Vagina (tissue), 2 donors: ENCODE measurements at regions of chr14 and their contacts with region 1.

Region 1: DNA sequence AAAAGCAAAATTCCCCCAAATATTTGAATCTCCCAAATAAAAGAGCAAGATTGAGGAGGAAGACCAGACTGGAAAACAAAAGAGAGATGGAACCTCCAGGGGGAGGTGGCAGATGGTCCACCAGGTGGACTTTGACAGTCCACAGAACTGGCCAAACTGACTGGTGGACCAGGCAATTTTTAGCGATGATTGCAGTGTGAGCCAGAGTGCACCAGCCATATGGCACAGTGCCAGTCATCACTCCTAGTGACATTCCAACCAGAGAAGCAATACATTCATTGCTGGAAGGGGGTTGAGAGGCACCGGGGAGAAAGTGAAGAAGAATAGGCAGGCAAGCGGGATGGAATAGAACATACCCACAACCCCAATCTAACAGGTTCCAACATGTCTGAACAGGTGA is 182.9 kb downstream of the EXOC5 start:
- DNase-seq: no peak
- H3K4me3 ChIP-seq: no peak overlapping the region
- H3K27ac ChIP-seq: no peak overlapping the region
- H3K4me1 ChIP-seq: no peaks in the 10 kb centered on the region
- H3K27me3 ChIP-seq: no peaks in the 10 kb centered on the region
- CTCF ChIP-seq: no peak
- POLR2A ChIP-seq: no peak

Region 2: GRCh38 chr14:57066887-57067513 is 18.8 kb before region 1 on chr14:
- intact Hi-C with region 1: loop called (anchors 1 kb)
- DNase-seq: no peak
- H3K4me3 ChIP-seq: no peak overlapping the region
- H3K27ac ChIP-seq: no peak overlapping the region
- H3K4me1 ChIP-seq: no peaks in the 10 kb centered on the region
- H3K27me3 ChIP-seq: no peaks in the 10 kb centered on the region
- CTCF ChIP-seq: no peak
- POLR2A ChIP-seq: no peak

Region 3: DNA sequence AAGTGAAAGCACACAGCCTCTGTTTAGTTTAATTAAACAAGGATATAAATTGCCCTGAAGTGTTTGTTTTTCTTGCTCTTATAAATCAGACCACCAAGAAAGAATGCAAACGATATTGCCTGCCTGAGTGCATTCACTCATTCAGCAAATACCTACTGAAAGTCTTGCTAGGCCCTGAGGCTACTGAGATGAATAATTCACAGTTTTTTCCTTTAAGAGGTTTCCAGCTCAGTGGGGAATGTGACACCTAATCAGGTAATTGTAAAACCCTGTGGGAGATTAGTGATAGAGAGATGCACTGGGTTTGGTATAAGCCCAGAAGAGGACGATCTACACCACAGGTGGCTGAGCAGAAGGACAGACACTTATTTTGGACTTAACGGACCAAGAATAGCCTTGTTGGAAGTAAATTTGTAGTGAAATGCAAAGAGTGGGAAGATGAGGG is 628.7 kb after region 1 on chr14:
- intact Hi-C with region 1: no loop called
- DNase-seq: no peak
- H3K4me3 ChIP-seq: no peak overlapping the region
- H3K27ac ChIP-seq: no peak overlapping the region
- H3K4me1 ChIP-seq: no peaks in the 10 kb centered on the region
- H3K27me3 ChIP-seq: no peaks in the 10 kb centered on the region
- CTCF ChIP-seq: no peak
- POLR2A ChIP-seq: no peak